ENCODE measurements at regions of chr22 and their contacts with region 1.

Region 1: GRCh38 chr22:45329530-45329936 is 19.8 kb downstream of the FAM118A start:
- DNase-seq: peak; percentile 91 to 96
- ATAC-seq: peak; percentile 54 to 70
- H3K4me3 ChIP-seq: no peak overlapping the region
- H3K27ac ChIP-seq: peak overlapping the region; percentile 88 to 91 (median 90)
- H3K4me1 ChIP-seq: peaks cover 50 to 52% of the 10 kb centered on the region in 2 donors
- H3K27me3 ChIP-seq: no peaks in the 10 kb centered on the region
- CTCF ChIP-seq: no peak
- POLR2A ChIP-seq: peak; percentile 43 to 49

Region 2: DNA sequence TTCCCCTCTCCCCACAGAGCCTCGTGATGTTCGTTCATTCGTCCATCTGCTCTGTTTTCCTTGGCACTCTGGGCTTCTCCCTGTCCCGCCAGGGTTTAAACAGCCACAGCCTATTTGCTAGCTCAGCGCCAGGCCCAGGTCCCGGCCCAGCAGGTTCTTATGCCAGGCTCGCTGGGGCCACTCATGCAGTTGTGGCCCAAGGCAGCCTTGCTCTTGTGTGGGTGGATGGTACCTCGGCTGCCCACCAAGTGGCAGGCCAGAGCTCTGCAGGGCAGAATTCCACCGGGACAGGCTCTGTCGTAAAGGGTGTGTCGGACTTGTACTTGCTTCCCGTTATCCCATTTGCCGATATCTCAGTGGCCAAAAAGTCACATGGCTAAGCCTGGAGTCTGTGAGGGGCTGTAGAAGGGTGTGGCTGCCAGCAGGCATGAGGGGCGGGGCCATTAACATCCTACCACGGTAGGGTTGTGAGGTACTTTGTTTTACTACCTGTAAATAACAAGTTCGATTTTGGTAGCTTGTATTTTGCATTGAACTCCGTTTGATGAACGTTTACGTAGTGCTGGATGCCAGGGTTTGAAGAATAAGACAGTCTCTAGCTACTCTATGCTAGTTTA is 11.9 kb before region 1 on chr22:
- in situ Hi-C with region 1: no loop called
- intact Hi-C with region 1: loop called (anchors 1 kb)
- DNase-seq: peak in 1 of 2 donors; percentile 73
- ATAC-seq: peak; percentile 37 to 67
- H3K4me3 ChIP-seq: peak overlapping the region in 1 of 4 donors; percentile 0
- H3K27ac ChIP-seq: peak overlapping the region; percentile 84 to 91 (median 88)
- H3K4me1 ChIP-seq: peaks cover 37 to 61% of the 10 kb centered on the region in 2 donors
- H3K27me3 ChIP-seq: no peaks in the 10 kb centered on the region
- CTCF ChIP-seq: peak; percentile 45 to 72 (median 50)
- POLR2A ChIP-seq: peak in 1 of 2 donors; percentile 40

Region 3: GRCh38 chr22:46035742-46036557 is 706.4 kb after region 1 on chr22:
- in situ Hi-C with region 1: no loop called
- intact Hi-C with region 1: loop called (anchors 10 kb)
- DNase-seq: peak; percentile 99 to 100
- ATAC-seq: peak; percentile 87 to 89
- H3K4me3 ChIP-seq: peak overlapping the region; percentile 75 to 80 (median 80)
- H3K27ac ChIP-seq: peak overlapping the region; percentile 97 to 99 (median 99)
- H3K4me1 ChIP-seq: peaks cover 42 to 45% of the 10 kb centered on the region in 2 donors
- H3K27me3 ChIP-seq: no peaks in the 10 kb centered on the region
- CTCF ChIP-seq: peak in 1 of 5 experiments; percentile 4
- POLR2A ChIP-seq: peak; percentile 96 to 98

Measured in gastrocnemius medialis (tissue), 4 donors.